Colonic mucosa (tissue), 4 donors: ENCODE measurements at regions of chr2 and their contacts with region 1.

Region 1: GRCh38 chr2:199979832-199980628 is 24.6 kb downstream of the MAIP1 start:
- DNase-seq: peak; percentile 90
- H3K4me3 ChIP-seq: no peak overlapping the region
- H3K27ac ChIP-seq: no peak overlapping the region
- H3K4me1 ChIP-seq: peaks cover 7% of the 10 kb centered on the region
- H3K27me3 ChIP-seq: no peaks in the 10 kb centered on the region
- CTCF ChIP-seq: peak; percentile 89

Region 2: GRCh38 chr2:200054681-200055468 is 74.8 kb after region 1 on chr2:
- intact Hi-C with region 1: no loop called
- DNase-seq: no peak
- H3K4me3 ChIP-seq: no peak overlapping the region
- H3K27ac ChIP-seq: no peak overlapping the region
- H3K4me1 ChIP-seq: peaks cover 6% of the 10 kb centered on the region
- H3K27me3 ChIP-seq: no peaks in the 10 kb centered on the region
- CTCF ChIP-seq: no peak

Region 3: DNA sequence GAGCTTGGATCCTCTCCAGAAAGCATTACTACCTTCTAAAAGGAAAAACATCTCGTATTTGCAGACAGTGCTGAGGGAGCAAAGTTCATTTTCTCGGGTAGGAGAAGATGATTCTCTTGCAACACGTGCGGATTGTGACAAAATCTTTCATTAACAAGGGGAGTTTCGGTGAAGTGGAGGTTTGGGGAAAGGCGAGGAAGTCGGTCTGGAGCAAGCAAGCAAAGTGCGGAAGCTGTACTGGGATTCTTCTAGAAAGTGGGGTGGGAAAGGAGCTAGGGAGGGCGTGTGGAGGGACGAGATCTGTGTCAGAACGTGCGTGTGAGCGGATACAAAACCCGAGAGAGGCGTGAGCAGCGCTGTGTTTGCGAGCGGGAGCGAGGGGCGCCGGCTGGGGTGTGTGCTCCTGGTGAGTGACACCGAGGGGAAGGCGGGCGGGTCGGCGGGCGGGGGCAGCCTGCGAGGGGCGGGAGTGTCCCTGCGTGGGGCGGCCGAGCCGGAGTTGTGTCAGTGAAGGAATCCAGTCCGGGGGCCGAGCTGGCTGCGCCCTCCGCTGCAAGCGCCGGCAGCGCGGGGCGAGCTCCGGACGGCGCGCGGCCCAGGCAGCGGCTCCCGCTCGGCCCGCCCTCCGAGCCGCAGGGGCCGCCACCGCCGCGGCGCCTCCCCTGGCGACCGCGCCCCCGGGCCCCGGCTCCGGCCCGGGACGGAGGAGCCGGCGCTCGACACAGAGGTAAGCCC is 326.3 kb after region 1 on chr2 and contains the start of gene SPATS2L:
- intact Hi-C with region 1: loop called (anchors 5 kb)
- DNase-seq: peak; percentile 82
- H3K4me3 ChIP-seq: peak within 1 kb of the TSS; percentile 78
- H3K27ac ChIP-seq: peak within 1 kb of the TSS; percentile 92
- H3K4me1 ChIP-seq: no peaks in the 10 kb centered on the region
- H3K27me3 ChIP-seq: no peaks in the 10 kb centered on the region
- CTCF ChIP-seq: no peak
- total RNA-seq, gene SPATS2L: 151 to 187 TPM

Region 4: GRCh38 chr2:200483729-200484198 is 503.7 kb after region 1 on chr2:
- intact Hi-C with region 1: loop called (anchors 5 kb)
- DNase-seq: peak; percentile 76
- H3K4me3 ChIP-seq: no peak overlapping the region
- H3K27ac ChIP-seq: no peak overlapping the region
- H3K4me1 ChIP-seq: no peaks in the 10 kb centered on the region
- H3K27me3 ChIP-seq: no peaks in the 10 kb centered on the region
- CTCF ChIP-seq: peak; percentile 62

Region 5: GRCh38 chr2:200735061-200735460 is 755.0 kb after region 1 on chr2:
- intact Hi-C with region 1: loop called (anchors 10 kb)
- DNase-seq: no peak
- H3K4me3 ChIP-seq: no peak overlapping the region
- H3K27ac ChIP-seq: no peak overlapping the region
- H3K4me1 ChIP-seq: no peaks in the 10 kb centered on the region
- H3K27me3 ChIP-seq: no peaks in the 10 kb centered on the region
- CTCF ChIP-seq: no peak